ENCODE measurements at regions of chr9 and their contacts with region 1.

Region 1: GRCh38 chr9:129626079-129626624 is at the start of gene NTMT1:
- DNase-seq: peak; percentile 86 to 96 (median 92)
- ATAC-seq: peak; percentile 74
- H3K4me3 ChIP-seq: peak within 1 kb of the TSS; percentile 94 to 99
- H3K4me3 Mint-ChIP-seq: peak within 1 kb of the TSS; percentile 83
- H3K27ac ChIP-seq: peak within 1 kb of the TSS; percentile 95 to 98
- H3K27ac Mint-ChIP-seq: peak within 1 kb of the TSS; percentile 98
- H3K4me1 ChIP-seq: peaks cover 51% of the 10 kb centered on the region
- H3K4me1 Mint-ChIP-seq: peaks cover 56% of the 10 kb centered on the region
- H3K27me3 ChIP-seq: no peaks in the 10 kb centered on the region
- H3K27me3 Mint-ChIP-seq: peaks cover 11% of the 10 kb centered on the region
- CTCF ChIP-seq: no peak
- total RNA-seq, gene NTMT1: 48.1 to 51.1 TPM

Region 2: GRCh38 chr9:129036241-129036922 is 589.8 kb before region 1 on chr9 and contains the start of gene MIGA2:
- CTCF ChIA-PET with region 1: no interaction called
- POLR2A ChIA-PET with region 1: no interaction called
- intact Hi-C with region 1: loop called in 1 of 2 experiments (anchors 5 kb)
- DNase-seq: peak; percentile 85 to 99 (median 94)
- ATAC-seq: peak; percentile 94
- H3K4me3 ChIP-seq: peak within 1 kb of the TSS; percentile 99
- H3K4me3 Mint-ChIP-seq: peak within 1 kb of the TSS; percentile 98
- H3K27ac ChIP-seq: peak within 1 kb of the TSS; percentile 68 to 83
- H3K27ac Mint-ChIP-seq: peak within 1 kb of the TSS; percentile 85
- H3K4me1 ChIP-seq: peaks cover 21% of the 10 kb centered on the region
- H3K4me1 Mint-ChIP-seq: peaks cover 36% of the 10 kb centered on the region
- H3K27me3 ChIP-seq: no peaks in the 10 kb centered on the region
- H3K27me3 Mint-ChIP-seq: no peaks in the 10 kb centered on the region
- CTCF ChIP-seq: no peak
- total RNA-seq, gene MIGA2: 63.5 to 69.0 TPM

Region 3: GRCh38 chr9:129131300-129132145 is 494.6 kb before region 1 on chr9:
- CTCF ChIA-PET with region 1: interaction called, 152 read pairs
- POLR2A ChIA-PET with region 1: interaction called, 10 read pairs
- intact Hi-C with region 1: no loop called
- DNase-seq: peak; percentile 77 to 92 (median 85)
- ATAC-seq: peak; percentile 100
- H3K4me3 ChIP-seq: no peak overlapping the region
- H3K4me3 Mint-ChIP-seq: no peak overlapping the region
- H3K27ac ChIP-seq: peak overlapping the region in 1 of 2 experiments; percentile 1
- H3K27ac Mint-ChIP-seq: peak overlapping the region; percentile 41
- H3K4me1 ChIP-seq: peaks cover 3% of the 10 kb centered on the region
- H3K4me1 Mint-ChIP-seq: peaks cover 5% of the 10 kb centered on the region
- H3K27me3 ChIP-seq: no peaks in the 10 kb centered on the region
- H3K27me3 Mint-ChIP-seq: no peaks in the 10 kb centered on the region
- CTCF ChIP-seq: peak; percentile 96

Region 4: GRCh38 chr9:129413537-129414376 is 212.4 kb before region 1 on chr9:
- CTCF ChIA-PET with region 1: no interaction called
- POLR2A ChIA-PET with region 1: no interaction called
- intact Hi-C with region 1: loop called (anchors 1 kb)
- DNase-seq: peak; percentile 97 to 100 (median 99)
- ATAC-seq: peak; percentile 76
- H3K4me3 ChIP-seq: peak overlapping the region; percentile 56 to 87
- H3K4me3 Mint-ChIP-seq: peak overlapping the region; percentile 87
- H3K27ac ChIP-seq: peak overlapping the region; percentile 99
- H3K27ac Mint-ChIP-seq: peak overlapping the region; percentile 99
- H3K4me1 ChIP-seq: peaks cover 27% of the 10 kb centered on the region
- H3K4me1 Mint-ChIP-seq: peaks cover 33% of the 10 kb centered on the region
- H3K27me3 ChIP-seq: no peaks in the 10 kb centered on the region
- H3K27me3 Mint-ChIP-seq: no peaks in the 10 kb centered on the region
- CTCF ChIP-seq: no peak

Region 5: DNA sequence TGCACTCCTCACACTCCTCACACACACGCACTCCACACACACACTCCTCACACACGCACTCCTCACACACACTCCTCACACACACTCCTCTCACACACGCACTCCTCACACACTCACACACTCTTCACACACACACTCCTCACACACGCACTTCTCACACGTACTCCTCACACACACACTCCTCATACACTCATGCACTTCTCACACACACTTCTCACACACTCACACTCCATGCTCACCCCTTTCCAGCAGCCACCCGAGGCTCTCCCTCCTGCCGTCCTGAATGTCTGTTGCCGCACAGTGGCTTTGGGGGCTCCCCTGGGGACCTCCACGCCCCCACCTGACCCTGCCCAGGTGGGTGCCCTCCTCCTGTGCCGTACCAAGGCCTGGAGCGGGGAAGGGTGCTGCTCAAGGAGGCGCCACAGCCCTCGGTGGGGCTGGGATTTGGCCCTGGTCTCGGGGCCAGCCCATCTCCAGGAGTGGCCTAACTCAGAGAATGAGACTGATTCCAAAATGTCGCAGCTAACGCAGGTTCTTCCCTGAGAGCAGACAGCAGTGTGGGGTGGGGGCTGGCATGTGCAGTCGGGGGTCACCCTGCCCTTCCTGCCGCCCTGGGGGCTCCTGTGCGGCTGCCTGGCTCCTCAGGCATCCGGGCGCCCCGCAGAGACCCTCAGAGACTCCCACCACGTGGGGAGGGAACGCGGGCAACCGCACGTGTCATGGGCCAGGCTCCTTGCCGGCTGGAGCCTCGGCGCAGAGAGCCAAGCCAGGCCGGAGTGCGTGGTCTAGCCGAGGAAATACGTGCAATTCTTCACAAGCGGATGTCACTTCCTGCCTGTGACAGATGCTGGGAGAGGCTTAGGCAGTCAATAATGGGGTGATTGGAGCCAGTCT is 49.6 kb before region 1 on chr9:
- CTCF ChIA-PET with region 1: no interaction called
- POLR2A ChIA-PET with region 1: no interaction called
- intact Hi-C with region 1: no loop called
- DNase-seq: no peak
- ATAC-seq: no peak
- H3K4me3 ChIP-seq: no peak overlapping the region
- H3K4me3 Mint-ChIP-seq: no peak overlapping the region
- H3K27ac ChIP-seq: no peak overlapping the region
- H3K27ac Mint-ChIP-seq: no peak overlapping the region
- H3K4me1 ChIP-seq: peaks cover 15% of the 10 kb centered on the region
- H3K4me1 Mint-ChIP-seq: peaks cover 18% of the 10 kb centered on the region
- H3K27me3 ChIP-seq: peaks cover 0 to 2% of the 10 kb centered on the region in 2 experiments
- H3K27me3 Mint-ChIP-seq: no peaks in the 10 kb centered on the region
- CTCF ChIP-seq: no peak

Region 6: DNA sequence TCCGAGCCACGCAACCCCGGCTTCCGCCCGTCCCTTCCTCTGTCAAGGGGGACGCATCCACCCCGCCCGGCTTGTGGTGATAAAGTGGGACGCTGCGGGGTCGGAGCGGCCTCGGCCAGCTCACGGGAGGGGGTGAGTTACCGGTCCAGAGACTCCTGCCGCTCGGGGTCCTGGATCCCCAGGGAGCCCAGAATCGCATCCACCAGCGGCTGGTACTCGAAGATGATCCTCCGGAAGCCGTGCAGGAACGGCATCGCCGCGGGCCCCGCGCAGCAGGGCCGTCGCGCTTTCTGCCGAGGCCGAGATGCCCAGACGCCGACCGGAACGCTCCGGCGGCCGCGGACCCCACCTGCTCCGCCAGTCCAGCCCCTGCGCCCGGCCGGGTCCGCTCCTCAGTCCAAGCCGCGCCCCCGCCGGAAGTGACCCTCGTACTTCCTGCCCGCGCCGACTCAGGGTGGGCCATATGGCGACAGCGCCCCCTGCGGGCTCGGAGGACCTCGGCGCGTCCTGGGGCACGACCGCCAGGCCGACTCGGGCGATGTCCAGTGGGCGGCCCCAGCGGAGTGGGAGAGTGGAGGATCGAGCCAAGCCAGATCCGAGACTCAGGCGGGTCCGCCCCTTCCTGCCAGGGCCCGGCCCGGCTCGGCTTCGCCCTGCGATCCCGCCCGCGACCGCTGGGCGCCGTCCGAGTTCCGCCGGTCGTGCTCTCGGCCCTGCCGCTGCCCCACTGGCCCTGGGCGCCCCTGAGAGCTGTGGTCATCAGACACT is 15.8 kb after region 1 on chr9 and contains the start of gene ASB6:
- CTCF ChIA-PET with region 1: interaction called, 74 read pairs
- POLR2A ChIA-PET with region 1: interaction called, 9 read pairs
- intact Hi-C with region 1: loop called (anchors 1 kb)
- DNase-seq: peak; percentile 78 to 97 (median 93)
- ATAC-seq: peak; percentile 76
- H3K4me3 ChIP-seq: peak within 1 kb of the TSS; percentile 98 to 99
- H3K4me3 Mint-ChIP-seq: peak within 1 kb of the TSS; percentile 85
- H3K27ac ChIP-seq: peak within 1 kb of the TSS; percentile 68 to 80
- H3K27ac Mint-ChIP-seq: peak within 1 kb of the TSS; percentile 89
- H3K4me1 ChIP-seq: peaks cover 23% of the 10 kb centered on the region
- H3K4me1 Mint-ChIP-seq: peaks cover 24% of the 10 kb centered on the region
- H3K27me3 ChIP-seq: no peaks in the 10 kb centered on the region
- H3K27me3 Mint-ChIP-seq: no peaks in the 10 kb centered on the region
- CTCF ChIP-seq: peak; percentile 100
- total RNA-seq, gene ASB6: 39.9 to 42.0 TPM

Region 7: DNA sequence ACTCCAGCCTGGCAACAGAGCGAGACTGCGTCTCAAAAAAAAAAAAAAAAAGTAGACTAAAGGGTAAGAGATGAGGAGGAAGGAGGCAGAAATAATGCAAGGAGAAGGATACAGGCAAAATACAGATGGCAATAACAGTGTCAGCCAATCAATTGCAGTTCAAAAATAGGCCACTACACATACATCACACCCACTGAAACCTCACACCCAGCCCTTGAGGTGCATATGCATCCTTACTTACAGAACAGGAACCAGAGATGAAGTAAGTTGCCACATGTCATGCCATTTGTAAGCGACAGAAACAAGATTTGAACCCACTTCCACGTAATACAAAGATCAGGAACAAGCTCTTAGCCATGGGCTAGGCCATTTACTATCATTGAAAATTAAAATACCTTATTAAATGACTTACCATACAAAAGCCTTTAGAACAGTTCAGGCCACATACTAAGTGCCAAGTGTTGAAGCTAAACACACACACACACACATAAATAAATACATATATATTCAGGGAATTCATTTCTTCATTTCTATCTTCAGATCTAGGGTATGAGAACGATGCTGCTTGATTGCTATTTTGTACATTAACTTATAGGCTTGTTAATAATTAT is 318.5 kb after region 1 on chr9:
- CTCF ChIA-PET with region 1: no interaction called
- POLR2A ChIA-PET with region 1: no interaction called
- intact Hi-C with region 1: loop called in 1 of 2 experiments (anchors 5 kb)
- DNase-seq: peak; percentile 21 to 90 (median 45)
- ATAC-seq: peak; percentile 88
- H3K4me3 ChIP-seq: no peak overlapping the region
- H3K4me3 Mint-ChIP-seq: peak overlapping the region; percentile 9
- H3K27ac ChIP-seq: peak overlapping the region; percentile 68 to 73
- H3K27ac Mint-ChIP-seq: peak overlapping the region; percentile 83
- H3K4me1 ChIP-seq: peaks cover 55% of the 10 kb centered on the region
- H3K4me1 Mint-ChIP-seq: peaks cover 51% of the 10 kb centered on the region
- H3K27me3 ChIP-seq: no peaks in the 10 kb centered on the region
- H3K27me3 Mint-ChIP-seq: no peaks in the 10 kb centered on the region
- CTCF ChIP-seq: peak; percentile 27